ENCODE measurements at regions of chr11 and their contacts with region 1.

Region 1: DNA sequence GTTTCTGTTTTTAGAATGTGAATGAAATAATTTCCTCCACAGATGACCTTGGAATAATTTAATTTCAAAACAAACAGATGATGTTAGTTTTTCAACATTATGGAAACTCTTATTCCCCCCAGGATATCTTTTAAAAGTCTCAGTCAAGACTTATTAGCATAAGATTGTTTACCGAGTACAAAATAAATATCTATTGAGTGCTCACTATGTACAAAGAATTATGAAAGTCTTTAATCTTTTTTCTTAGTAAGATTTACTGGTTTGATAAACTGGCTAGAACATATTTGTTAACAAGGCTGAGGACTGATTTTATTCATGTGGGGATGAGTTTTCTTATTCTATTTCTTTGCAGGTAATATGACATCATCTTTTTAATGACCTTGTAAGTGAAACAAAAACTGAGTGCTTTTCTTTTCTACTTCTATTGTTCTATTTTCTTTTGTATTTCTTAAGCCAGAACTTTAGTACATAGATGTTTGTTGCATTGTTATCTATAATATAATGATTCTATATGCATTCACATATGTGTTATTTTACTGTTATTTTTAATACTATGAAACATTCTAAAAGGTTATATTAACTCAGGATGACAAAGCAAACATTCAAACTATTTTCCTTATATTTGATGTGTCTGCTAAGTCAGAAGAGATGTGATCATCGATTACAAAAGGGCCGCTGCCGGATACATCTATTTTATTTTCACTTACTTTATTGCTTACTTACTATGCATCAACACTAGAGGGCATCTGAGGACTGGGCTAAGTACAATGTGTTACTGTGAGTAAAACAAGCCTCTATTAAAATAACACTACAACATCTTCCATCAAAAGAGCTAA is 111.0 kb upstream of the ARHGAP42 start:
- DNase-seq: no peak
- H3K4me3 ChIP-seq: no peak overlapping the region
- H3K27ac ChIP-seq: no peak overlapping the region
- H3K27me3 ChIP-seq: no peaks in the 10 kb centered on the region
- CTCF ChIP-seq: peak; percentile 90

Region 2: GRCh38 chr11:100563541-100564280 is 12.4 kb before region 1 on chr11:
- CTCF ChIA-PET with region 1: interaction called, 10 read pairs
- POLR2A ChIA-PET with region 1: no interaction called
- DNase-seq: no peak
- H3K4me3 ChIP-seq: no peak overlapping the region
- H3K27ac ChIP-seq: no peak overlapping the region
- H3K27me3 ChIP-seq: no peaks in the 10 kb centered on the region
- CTCF ChIP-seq: no peak

Region 3: GRCh38 chr11:100681064-100681502 is 105.0 kb after region 1 on chr11:
- CTCF ChIA-PET with region 1: interaction called, 93 read pairs
- POLR2A ChIA-PET with region 1: no interaction called
- DNase-seq: no peak
- H3K4me3 ChIP-seq: no peak overlapping the region
- H3K27ac ChIP-seq: no peak overlapping the region
- H3K27me3 ChIP-seq: no peaks in the 10 kb centered on the region
- CTCF ChIP-seq: no peak

Region 4: DNA sequence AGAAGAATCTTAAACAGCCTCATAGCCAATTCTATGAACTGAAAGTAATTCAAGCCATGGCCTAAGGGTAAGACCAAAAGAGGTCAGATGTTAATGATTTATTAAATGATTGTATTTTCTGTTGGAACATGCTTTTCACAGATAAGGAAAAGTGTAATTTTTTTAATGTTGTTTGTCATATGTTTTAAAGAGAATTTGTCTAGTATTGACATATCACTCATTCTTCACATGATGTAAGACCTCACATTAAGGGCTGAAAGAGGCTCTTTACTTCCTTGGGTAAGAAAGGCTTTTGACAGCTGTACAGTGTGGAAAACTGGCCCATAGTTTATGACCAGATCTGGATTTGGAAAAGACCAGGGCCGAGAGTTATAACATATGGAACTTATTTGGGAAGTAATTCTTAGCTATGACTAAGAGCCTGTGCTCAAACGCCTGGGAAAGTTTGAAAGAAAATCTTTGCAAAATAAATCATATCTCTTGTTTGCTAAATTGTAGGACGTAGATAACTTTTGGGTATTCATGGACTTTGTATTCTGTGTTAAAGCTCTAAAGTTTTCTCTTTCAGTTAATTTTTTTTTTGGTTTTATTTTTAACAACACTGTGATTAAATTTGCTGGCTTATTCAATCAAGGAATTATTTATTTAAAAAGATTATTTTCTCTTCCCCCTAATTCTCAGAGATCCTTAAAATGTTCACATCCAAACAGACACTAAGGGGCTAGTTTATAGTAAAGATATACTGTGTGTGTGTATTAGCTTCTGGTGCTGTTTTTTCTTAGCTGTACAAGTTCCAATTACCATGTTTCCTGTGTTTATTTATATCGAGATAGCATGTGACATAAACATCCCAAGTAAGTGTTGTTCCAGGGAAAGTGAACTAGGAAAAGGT is 273.2 kb after region 1 on chr11:
- CTCF ChIA-PET with region 1: interaction called, 34 read pairs
- POLR2A ChIA-PET with region 1: no interaction called
- DNase-seq: peak; percentile 72
- H3K4me3 ChIP-seq: no peak overlapping the region
- H3K27ac ChIP-seq: no peak overlapping the region
- H3K27me3 ChIP-seq: no peaks in the 10 kb centered on the region
- CTCF ChIP-seq: no peak

Region 5: GRCh38 chr11:100876815-100877520 is 300.9 kb after region 1 on chr11:
- CTCF ChIA-PET with region 1: interaction called, 13 read pairs
- POLR2A ChIA-PET with region 1: no interaction called
- DNase-seq: peak; percentile 92
- H3K4me3 ChIP-seq: no peak overlapping the region
- H3K27ac ChIP-seq: peak overlapping the region; percentile 88
- H3K27me3 ChIP-seq: no peaks in the 10 kb centered on the region
- CTCF ChIP-seq: no peak

Region 6: GRCh38 chr11:100930185-100930778 is 354.2 kb after region 1 on chr11:
- CTCF ChIA-PET with region 1: interaction called, 147 read pairs
- POLR2A ChIA-PET with region 1: no interaction called
- DNase-seq: no peak
- H3K4me3 ChIP-seq: no peak overlapping the region
- H3K27ac ChIP-seq: no peak overlapping the region
- H3K27me3 ChIP-seq: no peaks in the 10 kb centered on the region
- CTCF ChIP-seq: peak; percentile 59

Measured in AG04450 (cell line).